ENCODE measurements at regions of chr10 and their contacts with region 1.

Region 1: GRCh38 chr10:8331883-8332729 is 277.6 kb downstream of the GATA3 start:
- DNase-seq: peak; percentile 80 to 98 (median 88)
- ATAC-seq: peak; percentile 90
- H3K4me3 ChIP-seq: peak overlapping the region; percentile 61
- H3K4me3 Mint-ChIP-seq: peak overlapping the region; percentile 68
- H3K27ac ChIP-seq: peak overlapping the region; percentile 84 to 89
- H3K27ac Mint-ChIP-seq: peak overlapping the region; percentile 86
- H3K4me1 ChIP-seq: peaks cover 23% of the 10 kb centered on the region
- H3K4me1 Mint-ChIP-seq: peaks cover 44% of the 10 kb centered on the region
- H3K27me3 ChIP-seq: no peaks in the 10 kb centered on the region
- H3K27me3 Mint-ChIP-seq: no peaks in the 10 kb centered on the region
- CTCF ChIP-seq: no peak

Region 2: DNA sequence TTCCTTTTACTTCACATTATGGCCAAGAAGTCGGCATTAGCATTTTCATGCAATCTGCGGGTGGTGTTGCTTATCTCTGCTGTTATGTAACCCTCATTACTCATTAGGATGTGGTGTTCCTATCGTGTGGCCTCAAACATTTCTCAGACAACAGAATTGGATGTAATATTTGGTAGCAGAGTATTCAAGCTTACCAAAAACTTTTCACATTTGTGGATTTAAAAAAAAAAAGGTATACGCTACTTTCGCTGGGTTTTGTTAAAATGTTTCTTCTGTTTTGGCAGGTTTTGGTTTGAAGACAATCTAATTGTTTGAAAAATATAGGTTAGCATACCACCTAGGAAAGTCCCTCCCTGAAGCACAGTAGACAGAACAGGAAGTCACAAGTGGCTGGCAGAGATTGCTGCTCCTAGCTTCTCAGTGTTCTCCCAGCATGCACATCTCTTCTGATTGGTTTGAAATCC is 148.8 kb before region 1 on chr10:
- CTCF ChIA-PET with region 1: interaction called, 3 read pairs
- POLR2A ChIA-PET with region 1: interaction called, 15 read pairs
- intact Hi-C with region 1: no loop called
- DNase-seq: peak in 12 of 14 experiments; percentile 8 to 90 (median 26)
- ATAC-seq: peak; percentile 92
- H3K4me3 ChIP-seq: peak overlapping the region; percentile 6
- H3K4me3 Mint-ChIP-seq: peak overlapping the region; percentile 72
- H3K27ac ChIP-seq: peak overlapping the region; percentile 29 to 78
- H3K27ac Mint-ChIP-seq: peak overlapping the region; percentile 94
- H3K4me1 ChIP-seq: peaks cover 23% of the 10 kb centered on the region
- H3K4me1 Mint-ChIP-seq: peaks cover 48% of the 10 kb centered on the region
- H3K27me3 ChIP-seq: no peaks in the 10 kb centered on the region
- H3K27me3 Mint-ChIP-seq: no peaks in the 10 kb centered on the region
- CTCF ChIP-seq: no peak

Region 3: GRCh38 chr10:8221451-8221850 is 110.7 kb before region 1 on chr10:
- CTCF ChIA-PET with region 1: no interaction called
- POLR2A ChIA-PET with region 1: no interaction called
- intact Hi-C with region 1: no loop called
- DNase-seq: no peak
- ATAC-seq: no peak
- H3K4me3 ChIP-seq: no peak overlapping the region
- H3K4me3 Mint-ChIP-seq: no peak overlapping the region
- H3K27ac ChIP-seq: no peak overlapping the region
- H3K27ac Mint-ChIP-seq: no peak overlapping the region
- H3K4me1 ChIP-seq: peaks cover 7% of the 10 kb centered on the region
- H3K4me1 Mint-ChIP-seq: peaks cover 8% of the 10 kb centered on the region
- H3K27me3 ChIP-seq: no peaks in the 10 kb centered on the region
- H3K27me3 Mint-ChIP-seq: no peaks in the 10 kb centered on the region
- CTCF ChIP-seq: no peak

Region 4: DNA sequence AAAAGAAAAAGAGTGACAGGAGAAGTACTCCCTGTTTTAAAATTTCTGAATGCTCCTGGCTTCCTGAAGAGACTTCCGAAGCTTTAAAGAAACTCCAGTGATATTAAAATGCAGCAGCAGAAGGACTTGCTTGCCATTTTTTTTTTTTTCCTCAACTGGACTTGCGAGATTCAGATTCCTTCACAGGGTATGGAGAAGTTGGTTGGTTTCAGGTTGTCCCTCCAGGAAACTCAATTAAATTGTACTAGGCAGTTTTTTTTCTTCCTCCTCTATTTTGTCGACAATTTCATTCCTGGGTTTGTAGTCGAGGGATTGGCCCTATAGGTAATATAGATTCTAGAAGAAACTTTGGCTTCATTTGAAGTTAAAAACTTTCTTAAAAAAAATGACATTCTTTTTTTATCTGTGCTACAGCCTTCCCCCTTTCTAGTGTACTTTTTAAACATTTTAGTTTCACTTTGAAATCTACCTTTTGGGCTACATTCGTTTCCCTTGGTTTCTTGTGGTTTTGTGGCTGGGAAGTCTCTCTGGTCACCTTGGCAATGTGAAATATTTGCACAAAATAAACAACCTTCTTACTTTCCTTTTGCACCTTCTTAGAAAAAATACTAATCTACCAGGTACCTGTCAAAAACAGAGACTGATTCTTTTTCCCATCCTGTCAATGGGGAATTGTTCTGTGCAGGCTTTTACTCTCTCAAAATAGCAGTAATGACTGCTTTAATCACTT is 72.5 kb after region 1 on chr10:
- CTCF ChIA-PET with region 1: no interaction called
- POLR2A ChIA-PET with region 1: interaction called, 24 read pairs
- intact Hi-C with region 1: loop called (anchors 1 to 5 kb)
- DNase-seq: peak in 9 of 14 experiments; percentile 5 to 94 (median 38)
- ATAC-seq: peak; percentile 75
- H3K4me3 ChIP-seq: peak overlapping the region; percentile 14
- H3K4me3 Mint-ChIP-seq: peak overlapping the region; percentile 74
- H3K27ac ChIP-seq: peak overlapping the region; percentile 68 to 83
- H3K27ac Mint-ChIP-seq: peak overlapping the region; percentile 82
- H3K4me1 ChIP-seq: peaks cover 65% of the 10 kb centered on the region
- H3K4me1 Mint-ChIP-seq: peaks cover 77% of the 10 kb centered on the region
- H3K27me3 ChIP-seq: no peaks in the 10 kb centered on the region
- H3K27me3 Mint-ChIP-seq: no peaks in the 10 kb centered on the region
- CTCF ChIP-seq: no peak

Region 5: DNA sequence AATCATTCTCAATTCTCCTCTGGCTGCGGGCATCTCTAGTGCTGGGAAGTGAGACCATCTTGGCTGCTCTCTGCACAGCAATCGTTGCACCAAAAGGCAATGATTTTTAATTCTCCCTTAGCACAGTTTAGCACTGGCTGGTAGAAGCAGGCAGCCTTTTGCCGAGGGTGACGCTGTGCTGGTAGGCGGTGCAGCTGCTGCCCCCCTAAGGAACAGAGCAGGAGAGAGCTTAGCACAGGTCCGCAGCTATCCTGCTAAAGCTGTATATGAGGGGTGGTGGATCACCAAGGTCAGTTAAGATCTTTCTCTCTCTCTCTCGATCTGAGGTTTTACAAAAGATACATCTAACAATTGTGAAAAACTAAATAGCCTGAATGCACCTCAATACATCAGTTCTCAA is 112.5 kb after region 1 on chr10:
- CTCF ChIA-PET with region 1: no interaction called
- POLR2A ChIA-PET with region 1: interaction called, 3 read pairs
- intact Hi-C with region 1: loop called in 1 of 2 experiments (anchors 1 kb)
- DNase-seq: peak; percentile 6 to 73 (median 34)
- ATAC-seq: peak; percentile 87
- H3K4me3 ChIP-seq: no peak overlapping the region
- H3K4me3 Mint-ChIP-seq: no peak overlapping the region
- H3K27ac ChIP-seq: no peak overlapping the region
- H3K27ac Mint-ChIP-seq: no peak overlapping the region
- H3K4me1 ChIP-seq: peaks cover 5% of the 10 kb centered on the region
- H3K4me1 Mint-ChIP-seq: peaks cover 15% of the 10 kb centered on the region
- H3K27me3 ChIP-seq: no peaks in the 10 kb centered on the region
- H3K27me3 Mint-ChIP-seq: no peaks in the 10 kb centered on the region
- CTCF ChIP-seq: peak; percentile 57

Region 6: GRCh38 chr10:8577686-8578085 is 245.6 kb after region 1 on chr10:
- CTCF ChIA-PET with region 1: no interaction called
- POLR2A ChIA-PET with region 1: no interaction called
- intact Hi-C with region 1: no loop called
- DNase-seq: no peak
- ATAC-seq: no peak
- H3K4me3 ChIP-seq: no peak overlapping the region
- H3K4me3 Mint-ChIP-seq: no peak overlapping the region
- H3K27ac ChIP-seq: no peak overlapping the region
- H3K27ac Mint-ChIP-seq: no peak overlapping the region
- H3K4me1 ChIP-seq: no peaks in the 10 kb centered on the region
- H3K4me1 Mint-ChIP-seq: no peaks in the 10 kb centered on the region
- H3K27me3 ChIP-seq: no peaks in the 10 kb centered on the region
- H3K27me3 Mint-ChIP-seq: peaks cover 26% of the 10 kb centered on the region
- CTCF ChIP-seq: no peak

Region 7: DNA sequence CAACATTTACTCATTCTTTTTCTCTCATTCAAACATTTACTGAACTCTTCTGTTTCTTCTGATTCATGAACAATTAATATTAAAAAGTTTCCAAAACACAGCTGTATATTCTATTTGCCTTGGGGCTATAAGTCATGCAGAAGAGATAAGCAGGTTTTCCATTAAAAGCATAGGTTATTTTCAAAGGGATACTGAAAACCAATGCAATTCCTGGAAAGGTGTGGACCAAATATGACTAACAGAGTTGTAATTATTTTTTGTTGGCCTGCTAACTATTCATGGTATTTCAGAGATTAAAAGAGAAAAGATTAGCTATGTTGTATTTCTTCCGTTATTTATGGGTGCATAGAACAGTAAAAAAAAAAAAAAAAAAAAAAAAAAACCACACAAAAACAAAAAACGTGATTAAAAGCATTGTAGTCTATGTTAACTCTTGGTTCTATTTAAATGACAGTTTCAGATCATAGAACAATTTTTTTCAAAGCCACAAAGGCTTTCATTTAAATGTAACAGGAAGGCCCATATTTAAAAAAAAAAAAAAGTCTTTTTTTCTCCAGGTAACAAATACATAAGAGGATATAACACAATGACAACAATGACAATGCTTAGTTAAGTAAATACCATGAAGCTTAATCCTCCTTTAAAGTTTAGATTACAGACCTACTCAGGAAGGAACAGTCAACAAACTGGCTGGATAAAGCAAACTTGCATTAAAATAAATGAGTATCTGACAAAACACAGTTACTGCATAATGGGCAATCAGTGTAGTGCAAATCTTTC is 765.3 kb after region 1 on chr10:
- CTCF ChIA-PET with region 1: no interaction called
- POLR2A ChIA-PET with region 1: interaction called, 10 read pairs
- intact Hi-C with region 1: loop called in 1 of 2 experiments (anchors 10 kb)
- DNase-seq: peak in 3 of 14 experiments; percentile 58 to 81 (median 70)
- ATAC-seq: peak; percentile 62
- H3K4me3 ChIP-seq: no peak overlapping the region
- H3K4me3 Mint-ChIP-seq: peak overlapping the region; percentile 72
- H3K27ac ChIP-seq: no peak overlapping the region
- H3K27ac Mint-ChIP-seq: peak overlapping the region; percentile 88
- H3K4me1 ChIP-seq: peaks cover 17% of the 10 kb centered on the region
- H3K4me1 Mint-ChIP-seq: peaks cover 43% of the 10 kb centered on the region
- H3K27me3 ChIP-seq: no peaks in the 10 kb centered on the region
- H3K27me3 Mint-ChIP-seq: no peaks in the 10 kb centered on the region
- CTCF ChIP-seq: no peak